CD8-positive, alpha-beta memory T cell (primary cell): ENCODE measurements at regions of chr14 and their contacts with region 1.

Region 1: GRCh38 chr14:64478634-64479250 is 13.4 kb downstream of the AKAP5 start:
- DNase-seq: peak in 2 of 5 donors; percentile 11 to 15
- H3K4me3 ChIP-seq: no peak overlapping the region
- H3K4me3 Mint-ChIP-seq: no peak overlapping the region
- H3K27ac ChIP-seq: no peak overlapping the region
- H3K27ac Mint-ChIP-seq: peak overlapping the region in 2 of 8 donors; percentile 13 to 29
- H3K4me1 ChIP-seq: no peaks in the 10 kb centered on the region
- H3K4me1 Mint-ChIP-seq: peaks cover 6 to 35% (median 23%) of the 10 kb centered on the region in 3 donors
- H3K27me3 ChIP-seq: no peaks in the 10 kb centered on the region
- H3K27me3 Mint-ChIP-seq: no peaks in the 10 kb centered on the region

Region 2: GRCh38 chr14:64338616-64339316 is 140.0 kb before region 1 on chr14:
- CTCF ChIA-PET with region 1: interaction called, 25 read pairs
- POLR2A ChIA-PET with region 1: no interaction called
- DNase-seq: peak; percentile 74 to 89 (median 83)
- H3K4me3 ChIP-seq: peak overlapping the region; percentile 85
- H3K4me3 Mint-ChIP-seq: peak overlapping the region; percentile 88 to 99 (median 91)
- H3K27ac ChIP-seq: peak overlapping the region; percentile 36
- H3K27ac Mint-ChIP-seq: peak overlapping the region; percentile 62 to 95 (median 91)
- H3K4me1 ChIP-seq: peaks cover 14% of the 10 kb centered on the region
- H3K4me1 Mint-ChIP-seq: peaks cover 16 to 22% (median 21%) of the 10 kb centered on the region in 3 donors
- H3K27me3 ChIP-seq: no peaks in the 10 kb centered on the region
- H3K27me3 Mint-ChIP-seq: peaks cover 0 to 3% of the 10 kb centered on the region in 2 donors

Region 3: GRCh38 chr14:64421166-64421565 is 57.6 kb before region 1 on chr14:
- CTCF ChIA-PET with region 1: interaction called, 10 read pairs
- POLR2A ChIA-PET with region 1: no interaction called
- DNase-seq: no peak
- H3K4me3 ChIP-seq: no peak overlapping the region
- H3K4me3 Mint-ChIP-seq: no peak overlapping the region
- H3K27ac ChIP-seq: no peak overlapping the region
- H3K27ac Mint-ChIP-seq: peak overlapping the region in 1 of 8 donors; percentile 69
- H3K4me1 ChIP-seq: no peaks in the 10 kb centered on the region
- H3K4me1 Mint-ChIP-seq: peaks cover 0 to 6% (median 6%) of the 10 kb centered on the region in 3 donors
- H3K27me3 ChIP-seq: no peaks in the 10 kb centered on the region
- H3K27me3 Mint-ChIP-seq: peaks cover 0 to 2% of the 10 kb centered on the region in 2 donors

Region 4: GRCh38 chr14:64788668-64789067 is 309.9 kb after region 1 on chr14:
- CTCF ChIA-PET with region 1: no interaction called
- POLR2A ChIA-PET with region 1: no interaction called
- DNase-seq: no peak
- H3K4me3 ChIP-seq: no peak overlapping the region
- H3K4me3 Mint-ChIP-seq: no peak overlapping the region
- H3K27ac ChIP-seq: no peak overlapping the region
- H3K27ac Mint-ChIP-seq: peak overlapping the region in 1 of 8 donors; percentile 51
- H3K4me1 ChIP-seq: no peaks in the 10 kb centered on the region
- H3K4me1 Mint-ChIP-seq: no peaks in the 10 kb centered on the region
- H3K27me3 ChIP-seq: no peaks in the 10 kb centered on the region
- H3K27me3 Mint-ChIP-seq: peaks cover 0 to 5% of the 10 kb centered on the region in 2 donors